Activated CD8-positive, alpha-beta T cell treated with anti-CD3 and anti-CD28 coated beads, Interleukin-2, amount 10 ng/mL, durations not matched to agents 7 days and 5 days (primary cell): ENCODE measurements at regions of chr3 and their contacts with region 1.

Region 1: GRCh38 chr3:159804726-159805410 is 183.8 kb upstream of the IL12A start:
- DNase-seq: peak; percentile 57
- ATAC-seq: peak; percentile 53
- H3K4me3 Mint-ChIP-seq: no peak overlapping the region
- H3K27ac Mint-ChIP-seq: no peak overlapping the region
- H3K4me1 Mint-ChIP-seq: no peaks in the 10 kb centered on the region
- H3K27me3 Mint-ChIP-seq: peaks cover 16% of the 10 kb centered on the region

Region 2: DNA sequence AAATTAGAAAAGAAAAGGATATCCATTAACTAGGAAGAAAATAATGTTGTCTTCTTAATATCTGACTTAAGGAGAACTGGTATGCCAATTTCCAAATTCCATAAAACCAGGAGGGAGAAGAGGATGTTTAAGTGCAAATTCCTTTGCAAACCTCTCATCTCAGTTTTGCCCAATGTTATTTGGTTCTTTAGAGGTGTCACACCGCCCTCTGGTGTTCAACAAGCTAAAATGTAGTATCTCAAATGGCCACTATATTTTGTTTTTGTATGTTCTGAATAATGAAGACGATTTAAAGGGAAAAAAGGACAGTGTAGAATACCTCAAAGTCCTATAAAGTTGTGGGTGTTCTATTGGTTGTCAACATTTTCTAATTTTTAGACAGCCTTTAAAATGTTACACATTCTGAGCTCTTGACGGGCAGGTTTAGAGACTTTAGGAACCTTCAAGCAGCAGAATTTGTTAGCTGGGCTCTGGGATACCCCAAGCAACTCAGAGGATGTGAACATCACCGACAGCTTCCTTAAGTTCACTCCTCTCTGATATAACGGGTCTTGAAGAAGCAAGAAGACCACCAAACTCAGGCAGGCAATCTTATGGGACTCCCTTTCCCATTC is 544.7 kb before region 1 on chr3:
- CTCF ChIA-PET with region 1: interaction called, 10 read pairs
- POLR2A ChIA-PET with region 1: no interaction called
- DNase-seq: peak; percentile 61
- ATAC-seq: no peak
- H3K4me3 Mint-ChIP-seq: no peak overlapping the region
- H3K27ac Mint-ChIP-seq: no peak overlapping the region
- H3K4me1 Mint-ChIP-seq: no peaks in the 10 kb centered on the region
- H3K27me3 Mint-ChIP-seq: peaks cover 2% of the 10 kb centered on the region

Region 3: DNA sequence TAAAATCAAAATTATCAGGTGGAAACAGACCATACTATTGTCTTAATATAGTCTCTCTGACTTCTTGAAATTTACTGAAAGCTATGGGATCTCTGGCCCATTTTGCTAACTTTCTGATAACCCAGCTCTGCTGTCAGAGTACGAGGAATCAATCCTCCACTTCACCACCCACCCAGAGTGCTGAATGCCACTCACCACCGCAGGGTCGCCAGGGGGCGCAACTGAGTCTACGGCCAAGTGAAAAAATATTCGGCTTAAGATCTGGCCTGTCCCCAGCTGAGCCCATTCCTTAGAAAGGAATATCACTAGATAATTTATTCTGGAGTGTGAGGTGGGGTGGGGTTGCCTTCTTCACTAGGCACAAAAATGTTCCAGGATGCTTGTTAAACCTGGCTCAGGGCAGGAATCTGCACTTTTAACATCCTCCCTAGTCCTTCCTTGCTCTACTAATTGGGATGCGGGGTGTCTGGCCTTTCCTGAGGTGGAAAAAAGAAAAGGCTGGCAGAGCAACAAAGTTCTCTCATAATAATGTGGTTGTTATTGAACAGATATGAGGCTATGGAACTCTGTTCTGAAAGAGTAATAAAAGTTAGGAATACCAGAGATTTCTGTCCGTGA is 482.4 kb before region 1 on chr3:
- CTCF ChIA-PET with region 1: interaction called, 16 read pairs
- POLR2A ChIA-PET with region 1: no interaction called
- DNase-seq: peak; percentile 26
- ATAC-seq: no peak
- H3K4me3 Mint-ChIP-seq: no peak overlapping the region
- H3K27ac Mint-ChIP-seq: no peak overlapping the region
- H3K4me1 Mint-ChIP-seq: no peaks in the 10 kb centered on the region
- H3K27me3 Mint-ChIP-seq: no peaks in the 10 kb centered on the region

Region 4: DNA sequence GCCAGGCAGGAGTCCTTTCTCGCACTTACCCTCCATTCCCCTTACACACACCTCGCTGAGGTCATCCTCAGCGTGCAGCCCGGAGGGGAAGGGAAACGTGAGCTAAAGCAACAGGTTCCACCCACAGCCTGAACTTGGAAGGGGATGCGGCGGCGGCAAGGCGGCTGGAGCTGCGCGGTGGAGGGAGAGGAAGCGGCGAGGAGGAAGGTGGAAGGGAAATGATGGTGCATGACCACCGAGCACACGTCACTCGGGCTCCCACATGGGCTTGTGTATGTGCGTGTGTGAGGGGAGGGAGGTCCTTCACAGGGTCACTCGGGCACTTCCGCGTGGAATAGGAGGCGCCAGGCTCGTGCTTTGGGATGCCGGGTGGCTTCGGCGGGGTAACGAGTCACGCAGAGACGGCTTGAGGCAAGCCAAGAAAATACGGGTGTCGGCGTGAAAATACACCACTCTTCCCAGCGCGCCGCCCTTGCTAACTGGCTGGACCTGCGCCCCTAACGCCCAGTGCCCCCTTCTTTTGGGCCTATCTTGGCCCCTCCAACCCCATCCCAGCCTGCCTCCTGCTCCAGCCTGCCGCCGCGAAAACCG is 41.8 kb before region 1 on chr3:
- CTCF ChIA-PET with region 1: no interaction called
- POLR2A ChIA-PET with region 1: no interaction called
- DNase-seq: peak; percentile 67
- ATAC-seq: peak; percentile 68
- H3K4me3 Mint-ChIP-seq: peak overlapping the region; percentile 72
- H3K27ac Mint-ChIP-seq: peak overlapping the region; percentile 79
- H3K4me1 Mint-ChIP-seq: peaks cover 14% of the 10 kb centered on the region
- H3K27me3 Mint-ChIP-seq: peaks cover 48% of the 10 kb centered on the region

Region 5: GRCh38 chr3:159787191-159787590 is 17.7 kb before region 1 on chr3:
- CTCF ChIA-PET with region 1: no interaction called
- POLR2A ChIA-PET with region 1: no interaction called
- DNase-seq: no peak
- ATAC-seq: no peak
- H3K4me3 Mint-ChIP-seq: no peak overlapping the region
- H3K27ac Mint-ChIP-seq: no peak overlapping the region
- H3K4me1 Mint-ChIP-seq: no peaks in the 10 kb centered on the region
- H3K27me3 Mint-ChIP-seq: no peaks in the 10 kb centered on the region

Region 6: DNA sequence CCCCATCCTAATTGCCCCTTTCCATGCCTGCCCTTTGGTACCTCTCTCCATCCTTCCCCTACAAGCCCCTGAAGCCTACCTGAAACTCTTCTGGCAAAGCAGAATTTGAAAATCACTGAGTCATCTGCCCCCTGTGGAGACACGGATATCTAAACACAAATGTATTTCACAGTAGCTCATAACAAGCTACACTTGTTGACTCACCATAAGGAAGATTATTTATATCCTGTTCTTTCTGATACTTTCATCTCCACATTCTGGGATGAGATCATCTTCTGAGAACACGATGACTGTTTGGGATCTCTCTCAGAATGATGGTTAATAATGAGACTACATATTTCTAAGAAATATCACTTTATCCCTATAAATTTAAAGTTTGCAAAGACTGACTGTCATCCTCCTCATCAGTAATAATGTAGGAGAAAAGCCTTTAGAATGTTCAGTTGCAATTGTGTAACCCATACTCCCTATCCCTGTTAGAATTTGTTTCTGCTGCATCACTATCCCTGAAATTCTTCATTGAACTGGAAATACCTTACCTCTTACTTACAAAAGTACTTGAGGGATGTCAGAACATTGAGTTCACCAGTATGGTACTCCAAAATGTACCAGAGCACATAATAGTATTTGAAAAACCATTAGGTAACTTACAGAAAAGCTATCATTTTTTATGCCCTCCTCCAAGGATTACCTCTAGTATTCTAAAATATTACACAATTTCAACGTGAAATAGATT is 67.7 kb after region 1 on chr3:
- CTCF ChIA-PET with region 1: no interaction called
- POLR2A ChIA-PET with region 1: no interaction called
- DNase-seq: no peak
- ATAC-seq: no peak
- H3K4me3 Mint-ChIP-seq: no peak overlapping the region
- H3K27ac Mint-ChIP-seq: no peak overlapping the region
- H3K4me1 Mint-ChIP-seq: no peaks in the 10 kb centered on the region
- H3K27me3 Mint-ChIP-seq: peaks cover 13% of the 10 kb centered on the region